Mammary epithelial cell (primary cell): ENCODE measurements at regions of chr9 and their contacts with region 1.

Region 1: DNA sequence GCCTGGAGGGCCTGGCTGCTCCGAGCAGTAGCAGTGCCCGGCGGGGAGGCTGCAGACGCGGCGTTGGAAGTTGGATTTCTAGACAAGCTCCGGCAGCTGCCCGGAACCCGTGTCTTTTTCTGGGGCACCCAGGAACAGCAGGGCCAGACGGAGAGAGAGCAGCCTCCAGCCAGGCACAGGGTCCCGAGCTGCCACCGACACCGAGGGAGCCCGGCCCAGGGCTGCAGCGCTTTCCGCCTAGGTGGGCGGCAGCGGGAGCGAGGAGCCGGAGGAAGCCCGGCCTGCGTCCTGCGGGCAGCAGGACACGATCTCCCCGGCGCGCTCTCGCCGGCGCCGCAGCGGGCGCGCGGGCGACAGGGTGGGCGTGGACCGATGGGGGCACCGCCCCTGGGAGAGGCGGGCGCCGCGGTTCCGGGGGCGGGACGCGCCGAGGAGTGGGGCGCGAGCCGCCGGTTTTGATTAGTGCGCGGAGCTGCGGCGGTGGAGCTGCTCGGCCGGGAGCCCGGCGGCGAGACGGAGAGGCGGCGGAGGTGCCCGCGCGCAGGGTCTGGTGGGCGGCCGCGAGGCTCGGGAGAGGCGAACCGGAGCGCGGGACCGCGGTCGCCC is at the start of gene UGCG:
- DNase-seq: peak; percentile 92
- H3K4me3 ChIP-seq: peak within 1 kb of the TSS; percentile 76 to 94 (median 88)
- H3K27ac ChIP-seq: peak within 1 kb of the TSS; percentile 81
- H3K4me1 ChIP-seq: peaks cover 17% of the 10 kb centered on the region
- H3K27me3 ChIP-seq: no peaks in the 10 kb centered on the region
- CTCF ChIP-seq: no peak
- total RNA-seq, gene UGCG: 44.8 to 51.2 TPM

Region 2: DNA sequence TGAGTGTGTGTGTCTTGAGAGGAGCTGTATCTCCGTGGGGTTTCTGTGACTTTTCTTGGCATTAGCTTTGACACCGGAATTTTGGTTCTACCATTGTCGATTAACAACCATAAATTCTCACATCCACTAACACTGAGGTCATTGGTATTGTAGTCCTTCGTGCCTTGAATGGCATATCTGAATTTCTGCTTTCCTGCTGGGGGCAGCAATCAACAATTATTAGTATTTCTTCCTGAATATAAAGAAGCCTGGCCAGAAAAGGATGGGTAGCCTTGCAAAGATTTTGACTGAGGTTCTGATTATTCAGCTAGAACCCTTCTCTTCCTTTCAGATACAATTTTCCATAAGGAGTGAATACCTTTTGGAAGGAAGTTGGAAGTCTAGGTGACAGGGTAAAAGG is 68.3 kb before region 1 on chr9:
- CTCF ChIA-PET with region 1: no interaction called
- dilution Hi-C with region 1: no loop called
- in situ Hi-C with region 1: no loop called
- intact Hi-C with region 1: loop called (anchors 2 kb)
- DNase-seq: no peak
- H3K4me3 ChIP-seq: no peak overlapping the region
- H3K27ac ChIP-seq: no peak overlapping the region
- H3K4me1 ChIP-seq: peaks cover 18% of the 10 kb centered on the region
- H3K27me3 ChIP-seq: no peaks in the 10 kb centered on the region
- CTCF ChIP-seq: peak in 1 of 2 donors; percentile 27

Region 3: GRCh38 chr9:111878946-111879345 is 17.5 kb before region 1 on chr9:
- CTCF ChIA-PET with region 1: no interaction called
- dilution Hi-C with region 1: no loop called
- in situ Hi-C with region 1: no loop called
- intact Hi-C with region 1: loop called (anchors 2 kb)
- DNase-seq: no peak
- H3K4me3 ChIP-seq: no peak overlapping the region
- H3K27ac ChIP-seq: no peak overlapping the region
- H3K4me1 ChIP-seq: peaks cover 22% of the 10 kb centered on the region
- H3K27me3 ChIP-seq: no peaks in the 10 kb centered on the region
- CTCF ChIP-seq: no peak

Region 4: GRCh38 chr9:111957856-111958652 is 61.6 kb after region 1 on chr9:
- CTCF ChIA-PET with region 1: no interaction called
- dilution Hi-C with region 1: no loop called
- in situ Hi-C with region 1: no loop called
- intact Hi-C with region 1: loop called (anchors 1 kb)
- DNase-seq: peak; percentile 96
- H3K4me3 ChIP-seq: peak overlapping the region; percentile 0 to 14 (median 10)
- H3K27ac ChIP-seq: peak overlapping the region; percentile 96
- H3K4me1 ChIP-seq: peaks cover 43% of the 10 kb centered on the region
- H3K27me3 ChIP-seq: no peaks in the 10 kb centered on the region
- CTCF ChIP-seq: no peak

Region 5: GRCh38 chr9:112012026-112012902 is 115.8 kb after region 1 on chr9:
- CTCF ChIA-PET with region 1: no interaction called
- dilution Hi-C with region 1: no loop called
- in situ Hi-C with region 1: no loop called
- intact Hi-C with region 1: no loop called
- DNase-seq: peak; percentile 91
- H3K4me3 ChIP-seq: no peak overlapping the region
- H3K27ac ChIP-seq: peak overlapping the region; percentile 98
- H3K4me1 ChIP-seq: peaks cover 24% of the 10 kb centered on the region
- H3K27me3 ChIP-seq: no peaks in the 10 kb centered on the region
- CTCF ChIP-seq: no peak

Region 6: GRCh38 chr9:112074250-112075008 is 178.0 kb after region 1 on chr9:
- CTCF ChIA-PET with region 1: no interaction called
- dilution Hi-C with region 1: no loop called
- in situ Hi-C with region 1: loop called in 1 of 2 experiments (anchors 10 kb)
- intact Hi-C with region 1: loop called (anchors 1 kb)
- DNase-seq: peak; percentile 62
- H3K4me3 ChIP-seq: no peak overlapping the region
- H3K27ac ChIP-seq: peak overlapping the region; percentile 2
- H3K4me1 ChIP-seq: peaks cover 14% of the 10 kb centered on the region
- H3K27me3 ChIP-seq: no peaks in the 10 kb centered on the region
- CTCF ChIP-seq: peak; percentile 98 to 99